HepG2 (cell line): ENCODE measurements at regions of chr12 and their contacts with region 1.

Region 1: DNA sequence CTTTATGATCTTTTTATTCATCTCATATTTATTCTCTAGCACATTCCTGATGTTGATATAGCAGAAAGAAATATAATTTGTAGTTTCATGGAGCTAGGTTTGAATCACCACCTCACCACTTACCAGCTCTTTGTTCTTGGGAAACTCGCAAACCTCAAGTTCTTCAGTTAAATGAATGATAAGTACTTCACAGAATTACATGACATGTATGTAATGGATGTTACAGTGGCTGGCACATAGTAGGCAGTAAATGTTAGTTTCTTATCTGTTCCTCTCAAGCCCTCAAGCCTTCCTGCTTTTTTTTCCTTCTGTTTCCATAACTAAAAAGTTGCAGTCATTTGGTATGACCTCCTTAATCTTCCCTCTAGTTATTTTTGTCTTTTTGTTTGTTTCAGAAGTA is 54.9 kb downstream of the SPATS2 start:
- DNase-seq: no peak
- ATAC-seq: no peak
- H3K4me3 ChIP-seq: peak overlapping the region in 1 of 3 experiments; percentile 11; a peak in 1 of 6 replicates
- H3K27ac ChIP-seq: peak overlapping the region; percentile 58
- H3K4me1 ChIP-seq: peaks cover 68% of the 10 kb centered on the region
- H3K27me3 ChIP-seq: no peaks in the 10 kb centered on the region
- CTCF ChIP-seq: no peak
- EP300 ChIP-seq: no peak
- POLR2A ChIP-seq: no peak
- RAD21 ChIP-seq: no peak

Region 2: GRCh38 chr12:49174218-49174617 is 247.9 kb before region 1 on chr12:
- CTCF ChIA-PET with region 1: no interaction called
- POLR2A ChIA-PET with region 1: no interaction called
- in situ Hi-C with region 1: no loop called
- intact Hi-C with region 1: no loop called
- DNase-seq: no peak
- ATAC-seq: no peak
- H3K4me3 ChIP-seq: no peak overlapping the region
- H3K27ac ChIP-seq: no peak overlapping the region
- H3K4me1 ChIP-seq: no peaks in the 10 kb centered on the region
- H3K27me3 ChIP-seq: no peaks in the 10 kb centered on the region
- CTCF ChIP-seq: no peak
- EP300 ChIP-seq: no peak
- POLR2A ChIP-seq: no peak
- RAD21 ChIP-seq: no peak

Region 3: GRCh38 chr12:49410818-49411217 is 11.3 kb before region 1 on chr12:
- CTCF ChIA-PET with region 1: no interaction called
- POLR2A ChIA-PET with region 1: no interaction called
- in situ Hi-C with region 1: no loop called
- intact Hi-C with region 1: no loop called
- DNase-seq: no peak
- ATAC-seq: no peak
- H3K4me3 ChIP-seq: no peak overlapping the region
- H3K27ac ChIP-seq: no peak overlapping the region
- H3K4me1 ChIP-seq: peaks cover 29% of the 10 kb centered on the region
- H3K27me3 ChIP-seq: no peaks in the 10 kb centered on the region
- CTCF ChIP-seq: no peak
- EP300 ChIP-seq: no peak
- POLR2A ChIP-seq: no peak
- RAD21 ChIP-seq: no peak

Region 4: DNA sequence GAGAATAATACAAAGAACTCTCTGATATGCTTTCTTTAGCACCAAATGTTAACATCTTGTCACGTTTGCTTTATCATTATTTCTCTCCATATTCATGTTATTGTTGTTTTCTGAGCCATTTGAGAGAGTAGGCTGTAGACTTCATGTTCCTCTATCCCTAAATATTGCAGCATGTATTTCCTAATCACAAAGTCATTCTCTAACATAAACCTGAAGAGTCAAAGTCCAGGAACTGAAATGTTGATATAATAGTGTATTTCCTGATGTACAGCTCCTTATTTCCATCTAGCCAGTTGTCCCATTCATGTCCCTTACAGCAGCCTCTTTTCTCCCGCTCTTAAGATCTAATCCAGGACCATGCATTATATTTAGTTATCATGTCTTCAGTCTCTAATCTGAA is 17.9 kb after region 1 on chr12:
- CTCF ChIA-PET with region 1: no interaction called
- POLR2A ChIA-PET with region 1: no interaction called
- in situ Hi-C with region 1: no loop called
- intact Hi-C with region 1: loop called (anchors 1 kb)
- DNase-seq: peak; percentile 43
- ATAC-seq: no peak; the same call in 2 of the 3 replicates
- H3K4me3 ChIP-seq: no peak overlapping the region
- H3K27ac ChIP-seq: no peak overlapping the region
- H3K4me1 ChIP-seq: peaks cover 26% of the 10 kb centered on the region
- H3K27me3 ChIP-seq: no peaks in the 10 kb centered on the region
- CTCF ChIP-seq: no peak
- EP300 ChIP-seq: no peak
- POLR2A ChIP-seq: no peak
- RAD21 ChIP-seq: no peak

Region 5: DNA sequence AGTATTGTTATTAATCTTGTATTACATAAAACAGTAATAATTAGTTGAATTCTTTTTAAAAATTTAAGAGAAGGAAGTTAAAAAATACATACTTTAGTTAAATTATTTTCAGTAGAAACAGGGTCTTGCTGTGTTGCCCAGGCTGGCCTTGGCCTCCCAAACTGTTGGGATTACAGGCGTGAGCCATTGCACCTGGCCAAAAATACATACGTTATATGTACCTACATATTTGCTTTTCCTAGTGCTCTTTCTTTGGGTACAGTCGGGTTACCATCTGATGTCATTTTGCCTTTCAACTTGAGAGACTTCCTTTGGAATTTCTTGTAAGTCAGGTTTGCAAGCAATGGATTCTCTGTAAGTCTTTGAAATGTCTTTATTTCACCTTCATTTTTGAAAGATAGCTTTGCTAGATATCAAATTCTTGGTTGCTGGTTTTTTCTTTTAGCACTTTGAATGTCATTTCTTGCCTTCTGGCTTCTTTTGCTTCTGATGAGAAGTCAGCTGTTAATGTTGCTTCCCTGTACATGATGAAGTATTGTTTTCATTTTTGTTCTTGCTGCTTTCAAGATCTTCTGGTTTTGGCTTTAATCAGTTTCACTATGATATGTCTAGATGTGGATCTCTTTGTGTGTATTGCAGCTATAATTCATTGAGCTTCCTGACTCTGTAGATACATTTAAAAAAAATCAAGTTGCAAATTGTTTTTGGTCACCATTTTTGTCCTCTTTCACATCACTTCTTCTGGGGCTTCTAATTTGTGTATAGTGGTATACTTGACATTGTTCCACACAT is 29.6 kb after region 1 on chr12:
- CTCF ChIA-PET with region 1: no interaction called
- POLR2A ChIA-PET with region 1: no interaction called
- in situ Hi-C with region 1: no loop called
- intact Hi-C with region 1: no loop called
- DNase-seq: no peak
- ATAC-seq: no peak
- H3K4me3 ChIP-seq: no peak overlapping the region
- H3K27ac ChIP-seq: no peak overlapping the region
- H3K4me1 ChIP-seq: peaks cover 26% of the 10 kb centered on the region
- H3K27me3 ChIP-seq: no peaks in the 10 kb centered on the region
- CTCF ChIP-seq: no peak
- EP300 ChIP-seq: no peak
- POLR2A ChIP-seq: no peak
- RAD21 ChIP-seq: no peak